Activated CD4-positive, alpha-beta T cell treated with anti-CD3 and anti-CD28 coated beads for 36 hours (primary cell): ENCODE measurements at regions of chr4 and their contacts with region 1.

Region 1: DNA sequence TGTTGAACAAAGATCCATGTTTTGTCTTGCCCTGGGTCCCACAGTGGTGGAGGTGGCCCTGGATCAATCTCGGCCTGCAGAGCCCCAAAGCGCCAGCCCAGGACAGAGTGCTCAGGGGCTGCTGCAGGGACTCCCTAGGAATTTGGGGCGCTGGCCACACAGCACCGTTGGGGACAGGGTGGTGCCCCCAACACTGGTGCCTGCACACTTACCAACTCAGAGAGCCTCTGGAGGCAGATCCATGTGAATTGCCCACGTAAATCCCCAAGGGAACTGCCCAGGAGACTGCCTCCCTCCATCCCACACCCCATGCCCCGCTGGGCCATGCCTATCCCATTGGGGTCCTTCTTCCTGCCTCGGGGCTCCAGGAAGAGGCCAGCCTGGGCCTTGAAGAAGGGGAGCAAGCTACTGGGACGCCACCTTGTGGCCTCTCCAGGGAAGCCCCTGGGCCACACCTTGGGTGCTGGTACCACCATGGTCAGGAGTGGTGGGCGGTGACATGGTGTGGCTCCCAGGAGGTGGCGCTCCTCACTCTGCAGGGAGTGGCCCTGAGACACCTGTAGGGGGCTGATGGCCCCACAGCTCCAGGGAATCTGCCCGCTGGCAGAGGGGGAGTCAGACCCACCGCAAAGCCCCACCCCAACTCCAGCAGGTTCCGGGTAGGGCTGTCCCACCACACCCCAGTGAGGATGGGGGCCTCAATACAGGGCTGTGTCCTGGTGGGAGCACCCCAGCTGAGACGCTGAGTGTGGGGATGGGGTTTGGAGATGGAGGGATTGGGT is 22.8 kb downstream of the CFAP99 start:
- DNase-seq: peak; percentile 91
- ATAC-seq: peak; percentile 100
- H3K4me3 Mint-ChIP-seq: no peak overlapping the region
- H3K27ac Mint-ChIP-seq: no peak overlapping the region
- H3K4me1 Mint-ChIP-seq: peaks cover 2% of the 10 kb centered on the region
- H3K27me3 Mint-ChIP-seq: no peaks in the 10 kb centered on the region

Region 2: DNA sequence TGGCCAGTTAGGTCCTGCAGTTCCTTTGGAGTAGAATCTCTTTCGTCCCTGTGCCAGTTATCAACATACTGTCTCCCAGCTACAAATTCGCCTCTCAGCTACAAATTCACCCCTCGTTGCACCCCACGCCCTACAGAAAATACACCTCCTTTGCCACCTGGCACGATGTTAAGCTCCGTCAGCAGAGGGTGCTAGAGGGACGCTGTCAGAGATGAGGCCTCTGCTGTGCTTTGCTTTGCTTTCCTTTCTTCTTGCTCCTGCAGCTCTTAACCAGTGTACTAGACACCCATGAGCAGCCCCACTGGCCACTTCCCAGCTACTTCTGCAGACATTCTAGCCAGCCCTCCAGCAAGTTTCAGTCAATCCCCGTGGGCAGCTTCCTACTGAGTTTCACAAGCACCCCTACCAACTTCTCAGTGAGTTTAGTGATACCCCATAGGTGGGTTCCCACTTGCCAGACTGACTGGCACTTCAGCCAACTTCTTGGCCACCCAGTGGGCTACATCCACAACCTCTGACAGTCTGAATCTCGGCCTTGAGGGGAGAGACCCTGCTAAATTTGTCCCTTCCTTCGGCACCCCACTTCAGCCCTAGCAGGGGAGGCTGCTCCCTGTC is 221.5 kb before region 1 on chr4:
- CTCF ChIA-PET with region 1: interaction called, 18 read pairs
- POLR2A ChIA-PET with region 1: no interaction called
- intact Hi-C with region 1: loop called (anchors 1 kb)
- DNase-seq: peak; percentile 88
- ATAC-seq: peak; percentile 95
- H3K4me3 Mint-ChIP-seq: no peak overlapping the region
- H3K27ac Mint-ChIP-seq: no peak overlapping the region
- H3K4me1 Mint-ChIP-seq: no peaks in the 10 kb centered on the region
- H3K27me3 Mint-ChIP-seq: no peaks in the 10 kb centered on the region

Region 3: GRCh38 chr4:2281575-2282343 is 159.8 kb before region 1 on chr4:
- CTCF ChIA-PET with region 1: no interaction called
- POLR2A ChIA-PET with region 1: no interaction called
- intact Hi-C with region 1: loop called in 1 of 2 experiments (anchors 2 kb)
- DNase-seq: peak; percentile 83
- ATAC-seq: peak; percentile 96
- H3K4me3 Mint-ChIP-seq: no peak overlapping the region
- H3K27ac Mint-ChIP-seq: peak overlapping the region; percentile 82
- H3K4me1 Mint-ChIP-seq: peaks cover 34% of the 10 kb centered on the region
- H3K27me3 Mint-ChIP-seq: no peaks in the 10 kb centered on the region

Region 4: GRCh38 chr4:2418650-2419571 is 22.7 kb before region 1 on chr4 and contains the start of gene CFAP99:
- CTCF ChIA-PET with region 1: interaction called, 4 read pairs
- POLR2A ChIA-PET with region 1: interaction called, 3 read pairs
- intact Hi-C with region 1: loop called in 1 of 2 experiments (anchors 1 kb)
- DNase-seq: peak; percentile 99
- ATAC-seq: peak; percentile 93
- H3K4me3 Mint-ChIP-seq: peak within 1 kb of the TSS; percentile 82
- H3K27ac Mint-ChIP-seq: peak within 1 kb of the TSS; percentile 68
- H3K4me1 Mint-ChIP-seq: peaks cover 39% of the 10 kb centered on the region
- H3K27me3 Mint-ChIP-seq: peaks cover 27% of the 10 kb centered on the region
- total RNA-seq, gene CFAP99: 0.05 TPM in 1 of 2 experiments, not detected in the other

Region 5: DNA sequence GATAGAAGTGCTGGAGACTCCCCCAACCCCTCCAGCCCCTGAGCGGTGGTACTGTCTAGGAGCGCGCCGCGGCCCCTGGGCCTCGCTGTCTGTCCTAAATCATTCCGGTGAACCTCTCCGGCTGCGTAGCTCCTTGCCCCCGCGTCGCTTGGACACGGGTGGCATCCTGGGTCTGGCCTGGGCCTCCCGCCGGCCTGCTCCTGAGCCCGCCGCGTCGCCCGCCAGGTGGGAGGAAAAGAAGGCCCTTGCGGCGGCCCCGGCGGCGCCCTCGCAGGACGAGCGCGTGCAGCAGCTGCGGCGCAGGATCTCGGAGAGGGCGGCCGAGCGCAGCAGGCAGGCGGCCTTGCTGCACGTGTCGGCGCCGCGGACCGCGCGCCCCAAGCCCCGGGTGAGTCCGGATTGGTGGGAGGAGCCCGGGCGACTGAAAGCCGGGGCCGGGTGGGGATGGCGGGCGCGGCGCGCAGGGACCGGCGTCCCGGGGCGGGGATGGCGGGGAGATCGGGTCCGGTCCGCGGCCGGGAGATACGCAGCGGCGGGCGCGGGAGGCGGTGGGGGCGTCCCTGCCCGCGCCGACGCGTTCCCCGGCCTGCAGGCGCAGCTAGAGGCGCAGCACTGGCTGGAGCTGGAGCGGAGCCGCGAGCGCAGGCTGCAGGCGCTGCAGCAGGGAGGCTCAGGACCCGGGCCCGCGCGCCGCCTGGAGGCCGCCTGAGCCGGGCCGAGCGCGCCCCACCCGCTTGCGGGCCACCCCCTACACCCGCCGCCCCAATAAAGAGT is 20.8 kb after region 1 on chr4:
- CTCF ChIA-PET with region 1: interaction called, 7 read pairs
- POLR2A ChIA-PET with region 1: no interaction called
- intact Hi-C with region 1: loop called in 1 of 2 experiments (anchors 1 kb)
- DNase-seq: peak; percentile 80
- ATAC-seq: peak; percentile 98
- H3K4me3 Mint-ChIP-seq: peak overlapping the region; percentile 68
- H3K27ac Mint-ChIP-seq: no peak overlapping the region
- H3K4me1 Mint-ChIP-seq: peaks cover 12% of the 10 kb centered on the region
- H3K27me3 Mint-ChIP-seq: peaks cover 3% of the 10 kb centered on the region

Region 6: GRCh38 chr4:2482693-2483092 is 41.1 kb after region 1 on chr4:
- CTCF ChIA-PET with region 1: no interaction called
- POLR2A ChIA-PET with region 1: no interaction called
- intact Hi-C with region 1: no loop called
- DNase-seq: peak; percentile 41
- ATAC-seq: peak; percentile 68
- H3K4me3 Mint-ChIP-seq: peak overlapping the region; percentile 3
- H3K27ac Mint-ChIP-seq: peak overlapping the region; percentile 70
- H3K4me1 Mint-ChIP-seq: peaks cover 88% of the 10 kb centered on the region
- H3K27me3 Mint-ChIP-seq: no peaks in the 10 kb centered on the region